Activated naive CD4-positive, alpha-beta T cell treated with anti-CD3 and anti-CD28 coated beads for 36 hours (primary cell): ENCODE measurements at regions of chr2 and their contacts with region 1.

Region 1: GRCh38 chr2:173965329-173966025 is at the start of gene SP3:
- DNase-seq: peak; percentile 97
- H3K4me3 Mint-ChIP-seq: peak within 1 kb of the TSS; percentile 86
- H3K27ac Mint-ChIP-seq: peak within 1 kb of the TSS; percentile 99
- H3K4me1 Mint-ChIP-seq: peaks cover 21% of the 10 kb centered on the region
- H3K27me3 Mint-ChIP-seq: no peaks in the 10 kb centered on the region
- total RNA-seq, gene SP3: 89.8 to 99.7 TPM

Region 2: DNA sequence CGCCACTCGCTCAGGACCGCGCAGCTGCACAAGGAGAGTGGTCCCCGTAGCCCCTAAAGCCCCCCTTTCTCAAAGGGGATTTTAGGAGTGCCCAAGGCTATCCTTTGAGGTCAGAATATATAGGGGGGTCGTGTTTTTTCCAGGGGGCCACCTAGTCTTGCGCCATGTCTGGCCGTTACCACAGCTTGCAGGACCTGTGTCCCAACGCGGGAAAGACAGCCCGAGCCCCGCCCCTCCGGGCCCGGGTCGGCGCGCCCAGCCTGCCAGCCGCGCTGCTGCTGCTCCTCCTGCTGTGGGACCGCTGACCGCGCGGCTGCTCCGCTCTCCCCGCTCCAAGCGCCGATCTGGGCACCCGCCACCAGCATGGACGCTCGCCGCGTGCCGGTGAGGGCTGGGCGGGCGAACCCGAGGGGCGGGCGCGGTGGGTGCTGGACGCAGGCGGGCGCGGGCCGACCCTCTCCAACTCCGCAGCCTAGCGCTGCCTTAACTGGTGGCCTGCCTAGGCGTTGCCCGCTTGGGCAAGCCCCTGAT is 610.8 kb before region 1 on chr2 and contains the start of gene CDCA7:
- CTCF ChIA-PET with region 1: no interaction called
- intact Hi-C with region 1: loop called (anchors 10 kb)
- DNase-seq: peak; percentile 77
- H3K4me3 Mint-ChIP-seq: peak within 1 kb of the TSS; percentile 83
- H3K27ac Mint-ChIP-seq: peak within 1 kb of the TSS; percentile 85
- H3K4me1 Mint-ChIP-seq: peaks cover 14% of the 10 kb centered on the region
- H3K27me3 Mint-ChIP-seq: peaks cover 51% of the 10 kb centered on the region
- total RNA-seq, gene CDCA7: 74.0 to 74.7 TPM

Region 3: GRCh38 chr2:173955004-173955403 is 10.5 kb before region 1 on chr2:
- CTCF ChIA-PET with region 1: interaction called, 6 read pairs
- intact Hi-C with region 1: loop called (anchors 1 kb)
- DNase-seq: no peak
- H3K4me3 Mint-ChIP-seq: no peak overlapping the region
- H3K27ac Mint-ChIP-seq: no peak overlapping the region
- H3K4me1 Mint-ChIP-seq: peaks cover 80% of the 10 kb centered on the region
- H3K27me3 Mint-ChIP-seq: no peaks in the 10 kb centered on the region

Region 4: GRCh38 chr2:174039551-174040416 is 74.3 kb after region 1 on chr2:
- CTCF ChIA-PET with region 1: interaction called, 4 read pairs
- intact Hi-C with region 1: loop called (anchors 1 kb)
- DNase-seq: peak; percentile 92
- H3K4me3 Mint-ChIP-seq: peak overlapping the region; percentile 35
- H3K27ac Mint-ChIP-seq: peak overlapping the region; percentile 86
- H3K4me1 Mint-ChIP-seq: peaks cover 13% of the 10 kb centered on the region
- H3K27me3 Mint-ChIP-seq: no peaks in the 10 kb centered on the region

Region 5: GRCh38 chr2:174195253-174195652 is 229.8 kb after region 1 on chr2:
- CTCF ChIA-PET with region 1: no interaction called
- intact Hi-C with region 1: no loop called
- DNase-seq: no peak
- H3K4me3 Mint-ChIP-seq: no peak overlapping the region
- H3K27ac Mint-ChIP-seq: no peak overlapping the region
- H3K4me1 Mint-ChIP-seq: no peaks in the 10 kb centered on the region
- H3K27me3 Mint-ChIP-seq: no peaks in the 10 kb centered on the region

Region 6: DNA sequence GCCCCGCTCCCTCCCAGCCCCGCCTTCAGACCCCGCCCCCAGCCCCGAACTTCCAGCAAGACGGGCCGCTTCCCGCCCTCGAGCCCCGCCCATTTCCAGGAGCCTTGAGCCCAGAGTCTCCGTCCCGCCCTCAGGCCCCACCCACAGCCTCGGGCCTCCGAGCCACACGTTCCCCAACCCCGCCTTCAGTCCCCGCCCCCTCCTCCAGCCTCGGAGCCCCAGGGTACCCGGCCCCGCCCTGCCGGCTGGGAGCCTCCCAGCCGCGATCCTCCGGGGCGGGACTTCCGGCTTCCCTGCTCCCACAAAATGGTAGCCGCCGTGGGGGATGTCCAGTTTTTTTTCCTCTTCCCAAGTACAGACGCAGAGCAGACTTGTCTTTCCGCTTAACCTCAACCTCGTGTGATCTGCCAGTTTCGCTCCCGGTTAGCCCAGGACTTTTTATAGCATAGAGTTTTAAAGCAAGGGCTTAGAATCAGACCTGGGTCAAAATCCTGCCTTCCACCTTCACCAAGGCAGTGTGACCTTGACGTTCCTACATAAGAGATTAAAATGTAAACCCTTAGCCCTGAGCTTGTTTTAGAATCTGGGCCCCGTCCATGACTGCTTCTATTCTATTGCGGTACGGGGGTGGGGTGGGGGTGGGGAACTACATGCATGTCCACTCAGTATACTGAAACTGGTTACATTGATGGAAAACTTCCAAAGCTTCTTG is 521.8 kb after region 1 on chr2:
- CTCF ChIA-PET with region 1: no interaction called
- intact Hi-C with region 1: loop called (anchors 2 kb)
- DNase-seq: peak; percentile 100
- H3K4me3 Mint-ChIP-seq: peak overlapping the region; percentile 97
- H3K27ac Mint-ChIP-seq: peak overlapping the region; percentile 95
- H3K4me1 Mint-ChIP-seq: peaks cover 51% of the 10 kb centered on the region
- H3K27me3 Mint-ChIP-seq: no peaks in the 10 kb centered on the region

Region 7: GRCh38 chr2:175181104-175181876 is 1215.8 kb after region 1 on chr2 and contains the start of gene ATP5MC3:
- CTCF ChIA-PET with region 1: no interaction called
- intact Hi-C with region 1: loop called (anchors 5 kb)
- DNase-seq: peak; percentile 95
- H3K4me3 Mint-ChIP-seq: peak within 1 kb of the TSS; percentile 94
- H3K27ac Mint-ChIP-seq: peak within 1 kb of the TSS; percentile 85
- H3K4me1 Mint-ChIP-seq: peaks cover 29% of the 10 kb centered on the region
- H3K27me3 Mint-ChIP-seq: no peaks in the 10 kb centered on the region
- total RNA-seq, gene ATP5MC3: 308 to 310 TPM